CD8-positive, alpha-beta memory T cell (primary cell): ENCODE measurements at regions of chr6 and their contacts with region 1.

Region 1: GRCh38 chr6:106212576-106212975 is 113.0 kb downstream of the ATG5 start:
- DNase-seq: no peak
- H3K4me3 ChIP-seq: no peak overlapping the region
- H3K4me3 Mint-ChIP-seq: no peak overlapping the region
- H3K27ac ChIP-seq: no peak overlapping the region
- H3K27ac Mint-ChIP-seq: no peak overlapping the region
- H3K4me1 ChIP-seq: no peaks in the 10 kb centered on the region
- H3K4me1 Mint-ChIP-seq: peaks cover 10 to 24% (median 17%) of the 10 kb centered on the region in 3 donors
- H3K27me3 ChIP-seq: no peaks in the 10 kb centered on the region
- H3K27me3 Mint-ChIP-seq: no peaks in the 10 kb centered on the region

Region 2: DNA sequence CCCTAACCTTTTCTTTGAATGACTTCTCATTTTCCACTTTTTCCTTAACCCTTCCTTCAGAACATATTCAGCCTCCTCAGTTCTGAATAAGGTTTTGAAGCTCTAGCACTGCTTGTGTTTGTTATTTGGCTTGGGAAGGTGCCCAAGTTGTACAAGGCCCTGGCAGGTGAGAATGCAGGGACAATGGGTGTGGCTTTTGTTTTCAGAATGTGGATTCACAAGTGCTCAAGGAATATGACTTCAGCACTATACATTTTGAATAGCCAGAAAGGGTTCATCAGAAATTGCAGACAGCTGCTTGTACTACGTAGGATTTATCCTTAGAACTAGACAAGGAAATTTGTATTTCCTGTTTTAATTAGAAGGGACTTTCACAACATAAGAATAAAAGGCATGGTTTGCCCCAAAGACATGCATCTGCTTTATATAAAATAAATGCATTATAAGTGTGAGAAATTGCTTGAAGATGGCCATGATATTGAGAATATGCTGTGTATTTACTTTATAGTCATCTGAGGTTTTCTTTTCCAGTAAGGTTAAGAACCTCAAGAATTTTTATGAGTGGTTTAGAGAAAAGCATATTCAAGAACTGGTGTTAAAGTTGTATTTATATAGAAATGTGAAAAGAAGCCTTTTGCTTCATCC is 155.7 kb before region 1 on chr6:
- CTCF ChIA-PET with region 1: no interaction called
- POLR2A ChIA-PET with region 1: no interaction called
- DNase-seq: no peak
- H3K4me3 ChIP-seq: no peak overlapping the region
- H3K4me3 Mint-ChIP-seq: peak overlapping the region in 6 of 7 donors; percentile 2 to 69 (median 46)
- H3K27ac ChIP-seq: no peak overlapping the region
- H3K27ac Mint-ChIP-seq: peak overlapping the region in 3 of 8 donors; percentile 13 to 49 (median 20)
- H3K4me1 ChIP-seq: peaks cover 21% of the 10 kb centered on the region
- H3K4me1 Mint-ChIP-seq: peaks cover 26 to 33% (median 29%) of the 10 kb centered on the region in 3 donors
- H3K27me3 ChIP-seq: no peaks in the 10 kb centered on the region
- H3K27me3 Mint-ChIP-seq: no peaks in the 10 kb centered on the region

Region 3: DNA sequence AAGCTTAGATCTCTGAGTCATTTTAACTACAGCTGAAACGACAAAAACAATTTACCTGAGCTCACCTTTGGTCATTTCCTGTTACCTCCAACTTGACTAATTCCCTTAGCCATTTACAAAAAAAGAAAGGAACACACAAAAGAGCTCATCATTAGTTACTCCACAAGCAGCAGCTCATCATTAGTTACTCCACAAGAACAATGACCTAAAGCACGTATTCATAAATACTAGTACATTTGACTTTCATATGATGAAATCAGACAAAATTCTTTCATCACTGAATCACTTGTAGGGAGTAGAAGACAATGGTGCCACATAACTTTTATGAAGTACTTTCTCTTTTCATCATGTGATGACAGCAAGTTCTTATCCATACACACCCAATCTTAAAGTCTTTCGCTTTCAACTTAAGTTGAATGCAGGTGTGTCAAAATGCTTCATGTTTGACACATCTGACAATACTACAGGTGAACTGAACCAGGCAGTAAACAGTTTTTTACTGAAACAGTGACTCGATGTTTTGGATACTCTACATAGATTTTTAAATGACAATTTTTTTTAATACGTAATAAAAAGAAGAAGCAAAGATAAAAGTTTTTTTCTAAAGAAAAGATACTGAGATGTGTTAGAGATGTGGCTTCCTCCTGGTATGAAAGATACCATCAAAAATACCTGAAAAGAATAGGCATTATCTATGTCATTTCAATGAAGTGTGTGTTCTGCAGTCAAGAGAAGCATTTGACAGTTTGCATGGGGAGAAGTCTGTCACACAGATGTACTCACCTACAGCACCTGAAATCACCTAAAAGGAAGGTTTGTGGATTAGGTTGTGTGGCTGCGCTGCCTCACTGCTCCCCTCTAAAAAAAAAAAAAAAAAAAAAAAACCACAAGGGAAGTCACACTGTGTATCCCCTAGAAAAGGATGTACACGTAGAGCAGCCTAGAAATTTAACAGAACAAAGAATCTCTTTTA is 17.3 kb before region 1 on chr6:
- CTCF ChIA-PET with region 1: no interaction called
- POLR2A ChIA-PET with region 1: interaction called, 12 read pairs
- DNase-seq: peak in 3 of 5 donors; percentile 6 to 56 (median 34)
- H3K4me3 ChIP-seq: peak overlapping the region; percentile 27
- H3K4me3 Mint-ChIP-seq: peak overlapping the region; percentile 70 to 87 (median 72)
- H3K27ac ChIP-seq: peak overlapping the region; percentile 4
- H3K27ac Mint-ChIP-seq: peak overlapping the region; percentile 71 to 96 (median 89)
- H3K4me1 ChIP-seq: peaks cover 46% of the 10 kb centered on the region
- H3K4me1 Mint-ChIP-seq: peaks cover 38 to 57% (median 44%) of the 10 kb centered on the region in 3 donors
- H3K27me3 ChIP-seq: no peaks in the 10 kb centered on the region
- H3K27me3 Mint-ChIP-seq: no peaks in the 10 kb centered on the region

Region 4: GRCh38 chr6:106510090-106510970 is 297.8 kb after region 1 on chr6:
- CTCF ChIA-PET with region 1: no interaction called
- POLR2A ChIA-PET with region 1: no interaction called
- DNase-seq: peak; percentile 60 to 81 (median 68)
- H3K4me3 ChIP-seq: peak overlapping the region; percentile 82
- H3K4me3 Mint-ChIP-seq: peak overlapping the region; percentile 94 to 98 (median 97)
- H3K27ac ChIP-seq: no peak overlapping the region
- H3K27ac Mint-ChIP-seq: peak overlapping the region in 7 of 8 donors; percentile 41 to 99 (median 95)
- H3K4me1 ChIP-seq: peaks cover 19% of the 10 kb centered on the region
- H3K4me1 Mint-ChIP-seq: peaks cover 35 to 44% (median 43%) of the 10 kb centered on the region in 3 donors
- H3K27me3 ChIP-seq: no peaks in the 10 kb centered on the region
- H3K27me3 Mint-ChIP-seq: no peaks in the 10 kb centered on the region